ENCODE measurements at regions of chr1 and their contacts with region 1.

Region 1: DNA sequence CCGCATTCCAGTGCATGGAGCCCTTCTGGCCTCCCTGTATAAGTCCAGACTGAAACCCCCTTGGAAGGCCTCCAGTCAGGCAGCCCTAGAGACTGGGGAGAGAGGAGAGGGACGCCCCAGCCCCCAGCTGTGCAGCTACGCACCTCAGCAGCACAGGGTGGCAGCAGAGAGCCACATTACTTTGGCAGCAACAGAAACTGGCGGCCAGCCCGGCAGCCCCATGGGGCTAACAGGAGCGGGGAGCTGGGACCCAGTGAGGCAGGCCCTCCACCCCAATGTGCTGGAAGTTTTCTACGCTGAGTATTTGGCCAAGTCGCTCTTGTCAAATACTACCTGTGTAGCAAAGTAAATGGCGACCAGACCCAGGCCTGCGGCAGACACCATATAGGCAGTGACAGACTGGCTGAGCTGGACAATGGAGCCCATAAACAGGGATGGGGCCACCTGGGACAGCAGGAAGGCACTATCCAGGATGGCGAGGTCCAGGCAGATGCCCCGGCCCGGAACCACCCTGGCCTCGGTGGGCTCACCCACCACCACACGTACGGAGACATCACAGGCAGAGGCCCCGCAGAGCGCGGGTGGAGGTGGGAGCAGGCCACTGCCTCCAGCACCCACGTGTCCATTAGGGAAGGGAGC is 21.2 kb downstream of the SLC45A3 start:
- DNase-seq: peak; percentile 87
- ATAC-seq: peak; percentile 93
- H3K4me3 ChIP-seq: no peak overlapping the region
- H3K4me3 Mint-ChIP-seq: peak overlapping the region; percentile 10
- H3K27ac ChIP-seq: peak overlapping the region in 1 of 2 donors; percentile 72
- H3K27ac Mint-ChIP-seq: peak overlapping the region; percentile 32
- H3K4me1 ChIP-seq: peaks cover 18 to 25% of the 10 kb centered on the region in 2 donors
- H3K4me1 Mint-ChIP-seq: peaks cover 22% of the 10 kb centered on the region
- H3K27me3 ChIP-seq: no peaks in the 10 kb centered on the region
- H3K27me3 Mint-ChIP-seq: no peaks in the 10 kb centered on the region
- CTCF ChIP-seq: peak; percentile 89

Region 2: GRCh38 chr1:205485338-205486228 is 173.5 kb before region 1 on chr1:
- CTCF ChIA-PET with region 1: interaction called, 34 read pairs
- POLR2A ChIA-PET with region 1: no interaction called
- intact Hi-C with region 1: loop called (anchors 5 kb)
- DNase-seq: peak; percentile 85
- ATAC-seq: peak; percentile 78
- H3K4me3 ChIP-seq: no peak overlapping the region
- H3K4me3 Mint-ChIP-seq: no peak overlapping the region
- H3K27ac ChIP-seq: no peak overlapping the region
- H3K27ac Mint-ChIP-seq: peak overlapping the region; percentile 17
- H3K4me1 ChIP-seq: peaks cover 22 to 25% of the 10 kb centered on the region in 2 donors
- H3K4me1 Mint-ChIP-seq: peaks cover 28% of the 10 kb centered on the region
- H3K27me3 ChIP-seq: peaks cover 0 to 40% (median 5%) of the 10 kb centered on the region in 4 experiments
- H3K27me3 Mint-ChIP-seq: peaks cover 47% of the 10 kb centered on the region
- CTCF ChIP-seq: peak; percentile 94

Region 3: GRCh38 chr1:205591522-205592351 is 67.3 kb before region 1 on chr1:
- CTCF ChIA-PET with region 1: interaction called, 658 read pairs
- POLR2A ChIA-PET with region 1: interaction called, 10 read pairs
- intact Hi-C with region 1: loop called (anchors 1 kb)
- DNase-seq: peak; percentile 90
- ATAC-seq: peak; percentile 89
- H3K4me3 ChIP-seq: peak overlapping the region in 4 of 5 experiments; percentile 51 to 69 (median 60)
- H3K4me3 Mint-ChIP-seq: peak overlapping the region; percentile 87
- H3K27ac ChIP-seq: peak overlapping the region; percentile 59 to 72
- H3K27ac Mint-ChIP-seq: peak overlapping the region; percentile 85
- H3K4me1 ChIP-seq: peaks cover 46 to 54% of the 10 kb centered on the region in 2 donors
- H3K4me1 Mint-ChIP-seq: peaks cover 48% of the 10 kb centered on the region
- H3K27me3 ChIP-seq: no peaks in the 10 kb centered on the region
- H3K27me3 Mint-ChIP-seq: no peaks in the 10 kb centered on the region
- CTCF ChIP-seq: peak; percentile 98

Region 4: GRCh38 chr1:205693421-205693991 is 34.4 kb after region 1 on chr1:
- CTCF ChIA-PET with region 1: interaction called, 29 read pairs
- POLR2A ChIA-PET with region 1: interaction called, 7 read pairs
- intact Hi-C with region 1: no loop called
- DNase-seq: no peak
- ATAC-seq: no peak
- H3K4me3 ChIP-seq: no peak overlapping the region
- H3K4me3 Mint-ChIP-seq: no peak overlapping the region
- H3K27ac ChIP-seq: no peak overlapping the region
- H3K27ac Mint-ChIP-seq: no peak overlapping the region
- H3K4me1 ChIP-seq: peaks cover 12 to 13% of the 10 kb centered on the region in 2 donors
- H3K4me1 Mint-ChIP-seq: peaks cover 10% of the 10 kb centered on the region
- H3K27me3 ChIP-seq: no peaks in the 10 kb centered on the region
- H3K27me3 Mint-ChIP-seq: peaks cover 4% of the 10 kb centered on the region
- CTCF ChIP-seq: no peak

Region 5: DNA sequence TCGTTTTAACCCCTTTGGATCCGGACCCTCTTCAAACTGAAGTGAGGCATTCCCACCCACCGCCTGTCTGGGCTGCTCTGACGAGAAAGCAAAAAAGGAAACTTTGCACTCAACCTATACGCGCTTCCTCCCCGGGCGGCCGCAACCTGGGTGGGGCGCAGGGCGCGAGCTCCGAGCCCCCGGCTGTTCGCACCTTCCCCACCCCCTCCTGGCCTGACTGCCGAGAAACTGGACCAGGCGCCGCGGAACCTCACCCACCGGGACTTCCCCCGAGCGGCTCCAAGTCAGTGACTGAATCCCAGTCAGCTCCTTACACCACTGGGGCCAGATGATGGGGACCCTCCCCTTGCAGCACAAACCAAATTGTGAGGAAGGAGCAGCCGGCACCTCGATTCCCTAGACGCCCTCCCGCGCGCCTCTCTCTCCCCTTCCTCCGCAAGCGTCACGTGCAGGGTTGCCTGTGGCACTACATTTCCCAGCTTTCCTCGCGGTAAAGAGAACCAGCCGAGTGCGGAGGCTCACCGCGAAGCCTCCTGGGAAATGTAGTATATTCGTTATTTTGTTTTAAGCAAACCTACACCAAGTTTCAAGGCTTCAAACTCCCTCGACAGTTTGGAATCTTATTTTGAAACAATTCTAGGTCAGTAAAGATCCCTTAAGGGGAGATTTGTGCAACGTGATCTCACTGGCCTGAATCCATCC is 116.1 kb after region 1 on chr1 and contains the start of gene RAB29:
- CTCF ChIA-PET with region 1: interaction called, 11 read pairs
- POLR2A ChIA-PET with region 1: no interaction called
- intact Hi-C with region 1: no loop called
- DNase-seq: peak; percentile 94
- ATAC-seq: peak; percentile 89
- H3K4me3 ChIP-seq: peak within 1 kb of the TSS; percentile 73 to 89 (median 86)
- H3K4me3 Mint-ChIP-seq: peak within 1 kb of the TSS; percentile 98
- H3K27ac ChIP-seq: peak within 1 kb of the TSS; percentile 93 to 96
- H3K27ac Mint-ChIP-seq: peak within 1 kb of the TSS; percentile 99
- H3K4me1 ChIP-seq: peaks cover 44 to 48% of the 10 kb centered on the region in 2 donors
- H3K4me1 Mint-ChIP-seq: peaks cover 54% of the 10 kb centered on the region
- H3K27me3 ChIP-seq: no peaks in the 10 kb centered on the region
- H3K27me3 Mint-ChIP-seq: no peaks in the 10 kb centered on the region
- CTCF ChIP-seq: no peak
- total RNA-seq, gene RAB29: 59.7 and 61.4 TPM in 2 replicates

Region 6: GRCh38 chr1:205977402-205978014 is 318.4 kb after region 1 on chr1:
- CTCF ChIA-PET with region 1: interaction called, 112 read pairs
- POLR2A ChIA-PET with region 1: no interaction called
- intact Hi-C with region 1: no loop called
- DNase-seq: peak; percentile 83
- ATAC-seq: peak; percentile 84
- H3K4me3 ChIP-seq: no peak overlapping the region
- H3K4me3 Mint-ChIP-seq: no peak overlapping the region
- H3K27ac ChIP-seq: no peak overlapping the region
- H3K27ac Mint-ChIP-seq: no peak overlapping the region
- H3K4me1 ChIP-seq: no peaks in the 10 kb centered on the region
- H3K4me1 Mint-ChIP-seq: no peaks in the 10 kb centered on the region
- H3K27me3 ChIP-seq: no peaks in the 10 kb centered on the region
- H3K27me3 Mint-ChIP-seq: peaks cover 2% of the 10 kb centered on the region
- CTCF ChIP-seq: peak; percentile 96

Measured in B cell (primary cell).